ENCODE measurements at regions of chr5 and their contacts with region 1.

Region 1: GRCh38 chr5:91301106-91301846 is 81.8 kb downstream of the ARRDC3 start:
- DNase-seq: peak in 1 of 2 experiments; percentile 43
- ATAC-seq: peak; percentile 2 to 26; a peak in 2 of 6 replicates
- H3K4me3 ChIP-seq: no peak overlapping the region
- H3K27ac ChIP-seq: peak overlapping the region; percentile 38 to 68; a peak in 4 of 6 replicates
- H3K4me1 ChIP-seq: peaks cover 25% of the 10 kb centered on the region
- CTCF ChIP-seq: no peak
- EP300 ChIP-seq: no peak
- POLR2A ChIP-seq: no peak
- RAD21 ChIP-seq: no peak

Region 2: GRCh38 chr5:91206734-91207133 is 94.5 kb before region 1 on chr5:
- CTCF ChIA-PET with region 1: no interaction called
- POLR2A ChIA-PET with region 1: no interaction called
- DNase-seq: no peak
- ATAC-seq: peak; percentile 39 to 40; a peak in 2 of 6 replicates
- H3K4me3 ChIP-seq: no peak overlapping the region
- H3K27ac ChIP-seq: no peak overlapping the region
- H3K4me1 ChIP-seq: no peaks in the 10 kb centered on the region
- CTCF ChIP-seq: no peak
- EP300 ChIP-seq: no peak
- POLR2A ChIP-seq: no peak
- RAD21 ChIP-seq: no peak

Region 3: DNA sequence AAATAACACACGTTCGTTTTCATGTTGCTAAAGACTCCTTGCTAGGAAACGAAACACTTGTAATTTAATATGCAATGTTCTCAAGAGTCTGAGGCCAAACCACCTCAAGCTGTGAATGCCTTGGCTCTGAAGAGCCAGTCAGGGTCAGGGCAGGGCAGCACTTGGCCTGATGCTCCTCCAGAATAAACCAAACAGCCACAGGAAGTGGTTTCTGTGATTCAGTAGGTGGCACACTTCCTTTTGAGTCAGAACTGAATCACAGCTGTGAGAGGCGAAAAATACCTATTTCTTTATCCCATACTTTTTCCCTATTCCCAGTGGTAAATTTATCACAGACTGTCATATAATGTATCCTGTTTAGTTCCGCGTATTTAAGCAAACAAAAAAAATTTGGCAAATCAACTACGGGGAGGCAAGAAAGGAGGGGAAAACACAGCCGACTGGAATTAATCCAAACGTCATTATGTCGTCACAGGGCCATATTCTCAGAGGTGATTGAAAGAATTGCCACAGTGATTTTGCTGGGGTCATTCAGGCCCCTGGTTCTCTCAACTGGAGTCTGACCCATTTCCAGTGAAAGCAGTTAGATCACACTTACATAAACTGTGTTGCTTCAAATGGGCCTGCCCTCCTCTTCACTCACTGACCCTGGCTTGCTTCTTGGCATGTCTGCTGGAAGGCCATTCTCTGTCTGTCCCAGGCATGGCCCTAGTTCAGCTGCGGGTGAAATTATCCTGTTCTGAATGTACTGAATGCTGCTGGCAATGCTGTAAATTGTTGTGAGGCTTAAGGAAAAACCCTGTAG is 10.6 kb after region 1 on chr5:
- CTCF ChIA-PET with region 1: interaction called, 14 read pairs
- POLR2A ChIA-PET with region 1: interaction called, 7 read pairs
- DNase-seq: peak; percentile 86 to 94
- ATAC-seq: peak; percentile 78 to 80
- H3K4me3 ChIP-seq: peak overlapping the region; percentile 41
- H3K27ac ChIP-seq: peak overlapping the region; percentile 91 to 94
- H3K4me1 ChIP-seq: peaks cover 57% of the 10 kb centered on the region
- CTCF ChIP-seq: no peak
- EP300 ChIP-seq: peak; percentile 84 to 91; a peak in 4 of 5 replicates
- POLR2A ChIP-seq: no peak
- RAD21 ChIP-seq: peak; percentile 35 to 65; a peak in 4 of 5 replicates